Left ventricle myocardium superior (tissue), 1 donor: ENCODE measurements at regions of chr9 and their contacts with region 1.

Region 1: GRCh38 chr9:36400332-36401163 is 479 bp upstream of the RNF38 start:
- DNase-seq: peak; percentile 95
- ATAC-seq: peak; percentile 95

Region 2: DNA sequence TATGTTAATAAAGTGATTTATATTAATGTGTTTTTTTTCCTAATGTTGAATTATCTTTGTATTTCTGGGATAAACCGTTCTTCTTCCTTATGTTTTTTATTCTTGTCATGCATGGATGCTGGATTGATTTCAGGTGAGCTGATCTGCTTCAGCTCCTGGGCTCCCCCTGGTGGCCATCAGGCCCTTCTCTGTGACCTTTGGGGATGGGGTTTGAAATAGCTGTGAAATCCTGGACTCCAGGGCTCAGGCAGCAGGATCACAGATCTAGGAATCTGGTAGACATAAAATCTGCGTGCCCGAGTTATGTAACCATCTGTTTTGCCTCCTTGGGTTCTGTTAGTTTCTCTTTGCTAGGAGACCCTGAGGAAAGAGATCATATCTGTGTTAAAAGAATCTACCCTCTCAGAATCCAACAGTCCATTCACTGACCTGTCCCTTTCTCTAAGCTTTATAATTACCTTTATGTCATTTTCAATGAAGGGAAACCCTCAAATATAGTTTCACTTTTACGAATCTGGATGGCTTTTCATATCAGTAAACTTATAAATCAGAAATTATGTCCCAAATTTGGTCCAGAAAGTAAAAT is 518.2 kb before region 1 on chr9:
- intact Hi-C with region 1: no loop called
- DNase-seq: peak; percentile 93
- ATAC-seq: peak; percentile 83

Region 3: GRCh38 chr9:36461323-36461722 is 60.8 kb after region 1 on chr9:
- intact Hi-C with region 1: loop called (anchors 10 kb)
- DNase-seq: no peak
- ATAC-seq: peak; percentile 27